ENCODE measurements at regions of chr12 and their contacts with region 1.

Region 1: GRCh38 chr12:12611512-12612306 is at the start of gene CREBL2:
- DNase-seq: peak; percentile 88 to 89 (median 88)
- H3K4me3 ChIP-seq: peak within 1 kb of the TSS; percentile 92 to 97
- H3K4me3 Mint-ChIP-seq: peak within 1 kb of the TSS; percentile 92 to 99 (median 95)
- H3K27ac ChIP-seq: peak within 1 kb of the TSS; percentile 77
- H3K27ac Mint-ChIP-seq: peak within 1 kb of the TSS; percentile 93 to 99 (median 99)
- H3K4me1 ChIP-seq: peaks cover 66% of the 10 kb centered on the region
- H3K4me1 Mint-ChIP-seq: peaks cover 34 to 73% (median 54%) of the 10 kb centered on the region in 4 donors
- H3K27me3 ChIP-seq: no peaks in the 10 kb centered on the region
- H3K27me3 Mint-ChIP-seq: no peaks in the 10 kb centered on the region
- total RNA-seq, gene CREBL2: 51.0 to 52.0 TPM

Region 2: GRCh38 chr12:12622418-12622817 is 10.7 kb after region 1 on chr12:
- CTCF ChIA-PET with region 1: interaction called, 3 read pairs
- POLR2A ChIA-PET with region 1: interaction called, 63 read pairs
- intact Hi-C with region 1: loop called (anchors 1 kb)
- DNase-seq: peak; percentile 42 to 81 (median 71)
- H3K4me3 ChIP-seq: peak overlapping the region; percentile 9 to 21
- H3K4me3 Mint-ChIP-seq: peak overlapping the region; percentile 56 to 84 (median 72)
- H3K27ac ChIP-seq: peak overlapping the region; percentile 36
- H3K27ac Mint-ChIP-seq: peak overlapping the region; percentile 74 to 95 (median 90)
- H3K4me1 ChIP-seq: peaks cover 87% of the 10 kb centered on the region
- H3K4me1 Mint-ChIP-seq: peaks cover 62 to 100% (median 74%) of the 10 kb centered on the region in 4 donors
- H3K27me3 ChIP-seq: no peaks in the 10 kb centered on the region
- H3K27me3 Mint-ChIP-seq: no peaks in the 10 kb centered on the region

Region 3: GRCh38 chr12:12645485-12645884 is 33.8 kb after region 1 on chr12:
- CTCF ChIA-PET with region 1: interaction called, 5 read pairs
- POLR2A ChIA-PET with region 1: interaction called, 4 read pairs
- intact Hi-C with region 1: loop called (anchors 1 kb)
- DNase-seq: peak; percentile 52 to 70 (median 65)
- H3K4me3 ChIP-seq: no peak overlapping the region
- H3K4me3 Mint-ChIP-seq: no peak overlapping the region
- H3K27ac ChIP-seq: no peak overlapping the region
- H3K27ac Mint-ChIP-seq: peak overlapping the region in 5 of 7 donors; percentile 36 to 77 (median 55)
- H3K4me1 ChIP-seq: no peaks in the 10 kb centered on the region
- H3K4me1 Mint-ChIP-seq: peaks cover 6 to 11% (median 7%) of the 10 kb centered on the region in 4 donors
- H3K27me3 ChIP-seq: no peaks in the 10 kb centered on the region
- H3K27me3 Mint-ChIP-seq: no peaks in the 10 kb centered on the region

Region 4: GRCh38 chr12:12661086-12661485 is 49.4 kb after region 1 on chr12:
- CTCF ChIA-PET with region 1: interaction called, 10 read pairs
- POLR2A ChIA-PET with region 1: interaction called, 6 read pairs
- intact Hi-C with region 1: loop called (anchors 1 kb)
- DNase-seq: no peak
- H3K4me3 ChIP-seq: no peak overlapping the region
- H3K4me3 Mint-ChIP-seq: no peak overlapping the region
- H3K27ac ChIP-seq: no peak overlapping the region
- H3K27ac Mint-ChIP-seq: no peak overlapping the region
- H3K4me1 ChIP-seq: peaks cover 2% of the 10 kb centered on the region
- H3K4me1 Mint-ChIP-seq: peaks cover 0 to 1% (median under 1%) of the 10 kb centered on the region in 4 donors
- H3K27me3 ChIP-seq: no peaks in the 10 kb centered on the region
- H3K27me3 Mint-ChIP-seq: no peaks in the 10 kb centered on the region

Region 5: GRCh38 chr12:12716793-12717585 is 105.3 kb after region 1 on chr12 and contains the start of gene CDKN1B:
- CTCF ChIA-PET with region 1: no interaction called
- POLR2A ChIA-PET with region 1: interaction called, 49 read pairs
- intact Hi-C with region 1: loop called (anchors 2 kb)
- DNase-seq: peak; percentile 87 to 90 (median 89)
- H3K4me3 ChIP-seq: peak within 1 kb of the TSS; percentile 94 to 99
- H3K4me3 Mint-ChIP-seq: peak within 1 kb of the TSS; percentile 96 to 100 (median 98)
- H3K27ac ChIP-seq: peak within 1 kb of the TSS; percentile 95
- H3K27ac Mint-ChIP-seq: peak within 1 kb of the TSS; percentile 96 to 99 (median 98)
- H3K4me1 ChIP-seq: peaks cover 51% of the 10 kb centered on the region
- H3K4me1 Mint-ChIP-seq: peaks cover 38 to 63% (median 47%) of the 10 kb centered on the region in 4 donors
- H3K27me3 ChIP-seq: no peaks in the 10 kb centered on the region
- H3K27me3 Mint-ChIP-seq: no peaks in the 10 kb centered on the region
- total RNA-seq, gene CDKN1B: 232 to 238 TPM

Measured in CD4-positive, alpha-beta memory T cell (primary cell).